ENCODE measurements at regions of chr6 and their contacts with region 1.

Region 1: GRCh38 chr6:142265476-142265875 is 36.3 kb upstream of the ADGRG6 start:
- DNase-seq: peak; percentile 96
- ATAC-seq: peak; percentile 99
- H3K4me3 ChIP-seq: peak overlapping the region in 2 of 3 experiments; percentile 18 to 36; a peak in 1 of 6 replicates
- H3K27ac ChIP-seq: peak overlapping the region; percentile 38
- H3K4me1 ChIP-seq: peaks cover 48% of the 10 kb centered on the region
- H3K27me3 ChIP-seq: no peaks in the 10 kb centered on the region
- CTCF ChIP-seq: no peak
- EP300 ChIP-seq: peak in 1 of 2 experiments; percentile 96; a peak in 2 of 4 replicates
- POLR2A ChIP-seq: no peak
- RAD21 ChIP-seq: peak; percentile 28; the same call in 1 of the 2 replicates

Region 2: GRCh38 chr6:142236691-142237090 is 28.8 kb before region 1 on chr6:
- CTCF ChIA-PET with region 1: no interaction called
- POLR2A ChIA-PET with region 1: interaction called, 8 read pairs
- in situ Hi-C with region 1: no loop called
- intact Hi-C with region 1: loop called (anchors 5 kb)
- DNase-seq: no peak
- ATAC-seq: no peak
- H3K4me3 ChIP-seq: no peak overlapping the region
- H3K27ac ChIP-seq: no peak overlapping the region
- H3K4me1 ChIP-seq: peaks cover 26% of the 10 kb centered on the region
- H3K27me3 ChIP-seq: no peaks in the 10 kb centered on the region
- CTCF ChIP-seq: no peak
- EP300 ChIP-seq: no peak
- POLR2A ChIP-seq: no peak
- RAD21 ChIP-seq: no peak

Region 3: DNA sequence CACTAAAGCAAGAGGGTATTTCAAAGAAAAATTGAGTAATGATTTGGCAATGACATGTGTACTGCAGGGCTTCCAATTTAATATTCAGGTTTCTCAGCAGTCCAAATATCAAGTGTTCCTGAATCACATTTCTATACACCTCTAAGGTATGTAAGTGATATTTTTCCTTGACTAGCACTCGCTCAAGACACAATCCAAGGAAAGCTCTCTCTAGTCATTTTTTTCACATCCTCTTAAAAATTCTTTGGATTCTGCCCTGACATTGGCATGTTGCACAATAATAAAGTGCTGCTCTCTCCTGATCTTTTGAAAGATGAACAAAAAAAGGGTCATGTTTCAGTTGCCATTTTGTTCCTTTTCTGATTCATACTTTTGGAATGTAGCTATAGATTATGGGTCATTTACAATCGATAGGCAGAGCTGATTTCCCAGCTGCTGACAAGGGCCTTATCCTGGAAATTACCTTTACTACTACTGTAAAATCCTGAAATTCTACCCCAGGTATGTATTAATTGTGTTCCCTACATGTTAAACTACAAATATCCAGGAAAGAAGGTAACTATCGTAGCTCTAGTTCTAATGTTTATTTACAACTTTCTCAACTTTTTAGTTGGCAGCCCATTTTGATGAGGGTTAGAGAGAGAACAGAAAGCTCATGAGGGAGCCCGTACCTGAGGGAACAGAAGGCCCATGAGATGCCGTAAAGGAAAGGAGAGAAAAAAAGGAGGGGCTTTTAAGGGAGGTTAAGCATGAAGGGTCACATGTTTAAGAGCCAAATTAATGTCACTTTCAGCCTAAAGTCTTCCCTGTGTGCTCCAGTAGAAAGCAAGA is 14.1 kb after region 1 on chr6:
- CTCF ChIA-PET with region 1: no interaction called
- POLR2A ChIA-PET with region 1: interaction called, 36 read pairs
- in situ Hi-C with region 1: no loop called
- intact Hi-C with region 1: loop called (anchors 1 kb)
- DNase-seq: peak; percentile 81
- ATAC-seq: peak; percentile 76
- H3K4me3 ChIP-seq: peak overlapping the region in 1 of 3 experiments; percentile 6; a peak in 1 of 6 replicates
- H3K27ac ChIP-seq: peak overlapping the region; percentile 46
- H3K4me1 ChIP-seq: peaks cover 37% of the 10 kb centered on the region
- H3K27me3 ChIP-seq: no peaks in the 10 kb centered on the region
- CTCF ChIP-seq: no peak
- EP300 ChIP-seq: peak in 1 of 2 experiments; percentile 80; a peak in 2 of 4 replicates
- POLR2A ChIP-seq: no peak
- RAD21 ChIP-seq: no peak

Region 4: DNA sequence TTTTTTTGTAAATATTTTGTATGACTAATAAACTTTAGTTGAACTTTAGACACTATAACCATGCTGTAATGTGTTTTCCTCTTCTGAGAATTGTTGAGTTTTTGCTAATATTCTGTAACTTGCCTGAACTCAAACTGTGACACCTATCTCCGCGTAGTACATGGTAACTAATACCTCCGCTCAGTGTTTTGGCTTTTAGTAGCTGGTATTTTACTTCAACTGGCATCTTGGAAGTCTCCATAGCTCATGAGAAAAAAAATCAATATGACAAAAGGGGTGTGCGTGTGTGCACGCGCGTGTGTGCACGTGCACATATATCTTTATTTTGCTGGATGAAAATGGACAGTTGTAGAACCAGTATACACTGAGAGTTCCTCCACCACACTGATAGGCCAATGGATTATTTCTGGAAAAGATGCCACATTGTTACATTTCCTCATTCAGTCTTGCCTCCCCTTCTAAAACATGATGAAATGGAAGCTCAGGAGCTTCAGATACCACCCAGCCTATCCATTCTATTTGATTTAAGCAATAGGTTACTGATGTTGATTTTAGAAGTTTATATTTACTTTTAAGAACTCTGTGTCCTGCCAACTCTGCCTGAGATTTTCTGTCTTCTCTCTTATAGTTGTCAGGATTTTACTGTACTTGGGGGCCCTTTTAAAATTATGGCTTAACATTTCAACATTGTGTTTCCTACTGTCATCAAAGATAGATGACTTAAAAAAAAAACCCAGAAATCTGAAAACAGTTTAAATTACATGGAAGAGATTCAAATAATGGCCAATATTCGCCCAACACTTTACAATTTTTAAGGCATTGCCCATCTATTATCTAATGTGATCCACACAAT is 20.0 kb after region 1 on chr6:
- CTCF ChIA-PET with region 1: no interaction called
- POLR2A ChIA-PET with region 1: interaction called, 36 read pairs
- in situ Hi-C with region 1: no loop called
- intact Hi-C with region 1: no loop called
- DNase-seq: peak; percentile 91
- ATAC-seq: peak; percentile 99
- H3K4me3 ChIP-seq: peak overlapping the region in 2 of 3 experiments; percentile 27 to 55; a peak in 3 of 6 replicates
- H3K27ac ChIP-seq: peak overlapping the region; percentile 84
- H3K4me1 ChIP-seq: peaks cover 43% of the 10 kb centered on the region
- H3K27me3 ChIP-seq: no peaks in the 10 kb centered on the region
- CTCF ChIP-seq: no peak
- EP300 ChIP-seq: peak in 1 of 2 experiments; percentile 88; a peak in 2 of 4 replicates
- POLR2A ChIP-seq: no peak
- RAD21 ChIP-seq: peak; percentile 41; the same call in 1 of the 2 replicates

Region 5: GRCh38 chr6:142331075-142331551 is 65.6 kb after region 1 on chr6:
- CTCF ChIA-PET with region 1: no interaction called
- POLR2A ChIA-PET with region 1: no interaction called
- in situ Hi-C with region 1: no loop called
- intact Hi-C with region 1: loop called (anchors 2 kb)
- DNase-seq: peak; percentile 100
- ATAC-seq: peak; percentile 97
- H3K4me3 ChIP-seq: peak overlapping the region; percentile 21 to 36 (median 34); a peak in 4 of 6 replicates
- H3K27ac ChIP-seq: peak overlapping the region; percentile 80
- H3K4me1 ChIP-seq: peaks cover 98% of the 10 kb centered on the region
- H3K27me3 ChIP-seq: no peaks in the 10 kb centered on the region
- CTCF ChIP-seq: no peak
- EP300 ChIP-seq: peak; percentile 46 to 99; a peak in 3 of 4 replicates
- POLR2A ChIP-seq: no peak
- RAD21 ChIP-seq: peak; percentile 27; the same call in 1 of the 2 replicates

Region 6: GRCh38 chr6:142378138-142378875 is 112.8 kb after region 1 on chr6:
- CTCF ChIA-PET with region 1: no interaction called
- POLR2A ChIA-PET with region 1: interaction called, 19 read pairs
- in situ Hi-C with region 1: no loop called
- intact Hi-C with region 1: no loop called
- DNase-seq: peak; percentile 87
- ATAC-seq: peak; percentile 11; the same call in 2 of the 3 replicates
- H3K4me3 ChIP-seq: no peak overlapping the region
- H3K27ac ChIP-seq: peak overlapping the region; percentile 73
- H3K4me1 ChIP-seq: peaks cover 77% of the 10 kb centered on the region
- H3K27me3 ChIP-seq: no peaks in the 10 kb centered on the region
- CTCF ChIP-seq: no peak
- EP300 ChIP-seq: peak in 1 of 2 experiments; percentile 77; a peak in 2 of 4 replicates
- POLR2A ChIP-seq: no peak
- RAD21 ChIP-seq: no peak